T-cell (primary cell): ENCODE measurements at regions of chr19 and their contacts with region 1.

Region 1: DNA sequence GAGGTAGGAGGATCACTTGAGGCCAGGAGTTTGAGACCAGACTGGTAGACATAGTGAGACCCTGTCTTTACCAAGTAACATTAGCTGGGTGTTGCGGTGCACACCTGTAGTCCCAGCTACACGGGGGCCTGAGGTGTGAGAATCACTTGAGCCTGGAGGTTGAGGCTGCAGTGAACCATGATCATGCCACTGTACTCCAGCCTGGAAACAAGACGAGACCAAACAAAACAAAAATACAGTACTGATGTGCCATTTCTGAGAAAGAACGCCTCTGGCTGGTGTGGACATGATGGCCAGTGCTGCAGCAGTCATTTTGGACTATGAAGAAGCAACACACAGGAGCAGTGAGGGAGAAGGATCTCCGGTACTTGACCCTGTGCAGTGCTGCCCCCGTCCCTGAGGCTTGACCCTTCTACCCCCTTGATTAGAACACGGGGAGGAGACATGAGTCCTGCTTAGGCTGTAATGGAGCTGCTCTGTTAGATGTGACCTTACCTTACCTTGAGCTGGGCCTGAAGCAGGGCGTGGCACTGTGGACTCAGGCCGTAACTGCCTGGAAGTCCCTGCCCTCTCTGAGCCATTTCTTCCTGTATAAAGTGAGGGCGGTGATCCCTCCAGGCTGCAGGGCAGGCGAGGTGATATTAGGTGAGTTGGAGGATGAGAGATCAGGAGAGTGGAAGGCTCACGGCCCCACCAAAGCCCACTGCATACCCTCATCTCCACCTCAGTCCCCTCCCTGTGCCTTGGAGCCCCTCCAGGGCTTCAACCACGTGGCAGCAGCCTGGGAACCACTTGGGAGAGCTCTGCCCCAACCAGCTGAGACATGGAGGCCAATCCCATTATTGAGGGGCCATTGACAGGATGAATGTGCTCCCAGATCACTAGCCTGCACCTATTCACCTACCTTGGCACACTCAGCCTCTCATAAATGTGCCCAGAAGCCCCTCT is 5.9 kb downstream of the RPL18A start:
- DNase-seq: no peak
- ATAC-seq: no peak
- H3K4me3 ChIP-seq: no peak overlapping the region
- H3K4me3 Mint-ChIP-seq: no peak overlapping the region
- H3K27ac ChIP-seq: no peak overlapping the region
- H3K27ac Mint-ChIP-seq: peak overlapping the region; percentile 5 to 46
- H3K4me1 ChIP-seq: peaks cover 5 to 22% of the 10 kb centered on the region in 2 experiments
- H3K4me1 Mint-ChIP-seq: peaks cover 14 to 26% (median 16%) of the 10 kb centered on the region in 3 donors
- H3K27me3 ChIP-seq: peaks cover 0 to 7% of the 10 kb centered on the region in 2 experiments
- H3K27me3 Mint-ChIP-seq: no peaks in the 10 kb centered on the region

Region 2: GRCh38 chr19:17821190-17821589 is 44.4 kb before region 1 on chr19 and contains the start of gene INSL3:
- CTCF ChIA-PET with region 1: no interaction called
- POLR2A ChIA-PET with region 1: no interaction called
- DNase-seq: no peak
- ATAC-seq: no peak
- H3K4me3 ChIP-seq: no peak within 1 kb of the TSS
- H3K4me3 Mint-ChIP-seq: no peak within 1 kb of the TSS
- H3K27ac ChIP-seq: no peak within 1 kb of the TSS
- H3K27ac Mint-ChIP-seq: no peak within 1 kb of the TSS
- H3K4me1 ChIP-seq: no peaks in the 10 kb centered on the region
- H3K4me1 Mint-ChIP-seq: no peaks in the 10 kb centered on the region
- H3K27me3 ChIP-seq: no peaks in the 10 kb centered on the region
- H3K27me3 Mint-ChIP-seq: no peaks in the 10 kb centered on the region
- total RNA-seq, gene INSL3: 4.3 to 8.9 (median 5.4) TPM

Region 3: GRCh38 chr19:17841810-17842662 is 23.6 kb before region 1 on chr19:
- CTCF ChIA-PET with region 1: no interaction called
- POLR2A ChIA-PET with region 1: interaction called in 1 of 2 experiments, 12 read pairs
- DNase-seq: peak in 33 of 35 experiments; percentile 20 to 66 (median 46)
- ATAC-seq: peak; percentile 17 to 68 (median 40)
- H3K4me3 ChIP-seq: no peak overlapping the region
- H3K4me3 Mint-ChIP-seq: no peak overlapping the region
- H3K27ac ChIP-seq: no peak overlapping the region
- H3K27ac Mint-ChIP-seq: no peak overlapping the region
- H3K4me1 ChIP-seq: peaks cover 9 to 57% of the 10 kb centered on the region in 2 experiments
- H3K4me1 Mint-ChIP-seq: peaks cover 37 to 41% (median 41%) of the 10 kb centered on the region in 3 donors
- H3K27me3 ChIP-seq: no peaks in the 10 kb centered on the region
- H3K27me3 Mint-ChIP-seq: no peaks in the 10 kb centered on the region